PC-3 (cell line): ENCODE measurements at regions of chr3 and their contacts with region 1.

Region 1: DNA sequence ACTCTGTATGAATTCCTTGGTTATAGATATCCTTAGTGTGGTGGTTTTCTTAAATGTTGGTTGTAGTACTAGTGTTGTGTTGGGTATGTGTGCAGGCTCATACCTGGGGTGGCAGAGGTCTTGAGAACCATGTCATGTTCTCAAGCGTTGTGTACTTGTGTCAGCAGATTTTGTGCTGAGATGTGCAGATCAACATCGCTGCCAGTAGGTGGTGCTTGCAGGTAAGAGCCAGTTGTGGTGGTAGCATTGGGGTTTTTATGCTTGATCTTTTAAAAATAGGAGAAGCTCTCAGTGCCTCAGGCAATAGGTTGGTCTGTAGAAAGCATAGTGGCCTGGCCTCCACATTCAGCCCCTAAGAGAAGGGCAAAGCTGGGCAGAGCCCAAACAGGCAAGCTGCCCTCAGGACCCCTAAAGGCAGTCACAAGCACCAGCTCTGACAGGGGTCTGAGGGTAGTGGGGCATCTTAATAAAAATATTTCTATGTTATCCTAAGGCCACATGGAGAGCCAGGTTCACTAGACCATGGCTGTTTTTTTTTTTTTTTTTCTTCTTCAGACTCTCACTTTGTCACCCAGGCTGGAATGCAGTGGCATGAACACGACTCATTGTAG is 164.0 kb downstream of the IL20RB start:
- DNase-seq: peak; percentile 52
- ATAC-seq: peak; percentile 56
- H3K4me3 ChIP-seq: no peak overlapping the region
- H3K27ac ChIP-seq: no peak overlapping the region
- H3K4me1 ChIP-seq: no peaks in the 10 kb centered on the region
- H3K27me3 ChIP-seq: peaks cover 14% of the 10 kb centered on the region
- CTCF ChIP-seq: peak; percentile 68

Region 2: GRCh38 chr3:137148917-137149316 is 27.1 kb after region 1 on chr3:
- CTCF ChIA-PET with region 1: no interaction called
- POLR2A ChIA-PET with region 1: no interaction called
- intact Hi-C with region 1: no loop called
- DNase-seq: no peak
- ATAC-seq: no peak
- H3K4me3 ChIP-seq: no peak overlapping the region
- H3K27ac ChIP-seq: no peak overlapping the region
- H3K4me1 ChIP-seq: no peaks in the 10 kb centered on the region
- H3K27me3 ChIP-seq: no peaks in the 10 kb centered on the region
- CTCF ChIP-seq: no peak

Region 3: GRCh38 chr3:137165117-137165806 is 43.5 kb after region 1 on chr3:
- CTCF ChIA-PET with region 1: interaction called, 19 read pairs
- POLR2A ChIA-PET with region 1: no interaction called
- intact Hi-C with region 1: no loop called
- DNase-seq: peak; percentile 29
- ATAC-seq: no peak
- H3K4me3 ChIP-seq: no peak overlapping the region
- H3K27ac ChIP-seq: no peak overlapping the region
- H3K4me1 ChIP-seq: no peaks in the 10 kb centered on the region
- H3K27me3 ChIP-seq: no peaks in the 10 kb centered on the region; the same call in 1 of the 2 replicates
- CTCF ChIP-seq: no peak